Mammary epithelial cell (primary cell): ENCODE measurements at regions of chr19 and their contacts with region 1.

Region 1: GRCh38 chr19:50922317-50922853 is 11.2 kb upstream of the KLK4 start:
- DNase-seq: peak; percentile 77
- H3K4me3 ChIP-seq: no peak overlapping the region
- H3K27ac ChIP-seq: no peak overlapping the region
- H3K4me1 ChIP-seq: peaks cover 22% of the 10 kb centered on the region
- H3K27me3 ChIP-seq: no peaks in the 10 kb centered on the region
- CTCF ChIP-seq: peak; percentile 72 to 94

Region 2: DNA sequence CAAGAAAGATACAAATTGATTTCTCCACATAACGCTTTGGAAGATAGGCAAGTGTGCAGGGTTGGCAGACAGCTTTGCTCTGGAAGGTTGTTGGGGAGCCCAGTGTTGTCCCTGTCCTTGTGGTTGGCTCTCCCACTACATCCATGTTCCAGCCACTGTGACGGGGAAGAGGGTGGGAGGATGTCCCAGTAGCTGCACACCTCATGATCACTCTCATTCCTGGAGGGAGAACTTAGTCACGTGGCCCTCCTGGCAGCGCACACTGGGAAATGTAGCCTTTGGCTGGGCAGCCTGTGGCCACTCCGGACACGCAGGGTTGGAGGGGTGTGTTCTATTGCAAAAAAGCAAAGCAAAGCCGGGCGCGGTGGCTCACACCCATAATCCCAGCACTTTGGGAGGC is 528.4 kb before region 1 on chr19:
- CTCF ChIA-PET with region 1: no interaction called
- dilution Hi-C with region 1: no loop called
- in situ Hi-C with region 1: no loop called
- intact Hi-C with region 1: no loop called
- DNase-seq: no peak
- H3K4me3 ChIP-seq: no peak overlapping the region
- H3K27ac ChIP-seq: no peak overlapping the region
- H3K4me1 ChIP-seq: no peaks in the 10 kb centered on the region
- H3K27me3 ChIP-seq: no peaks in the 10 kb centered on the region
- CTCF ChIP-seq: no peak

Region 3: GRCh38 chr19:50537762-50538230 is 384.6 kb before region 1 on chr19:
- CTCF ChIA-PET with region 1: no interaction called
- dilution Hi-C with region 1: no loop called
- in situ Hi-C with region 1: no loop called
- intact Hi-C with region 1: loop called (anchors 2 kb)
- DNase-seq: peak; percentile 58
- H3K4me3 ChIP-seq: no peak overlapping the region
- H3K27ac ChIP-seq: no peak overlapping the region
- H3K4me1 ChIP-seq: no peaks in the 10 kb centered on the region
- H3K27me3 ChIP-seq: no peaks in the 10 kb centered on the region
- CTCF ChIP-seq: peak; percentile 87

Region 4: GRCh38 chr19:50705422-50706019 is 216.9 kb before region 1 on chr19:
- CTCF ChIA-PET with region 1: no interaction called
- dilution Hi-C with region 1: no loop called
- in situ Hi-C with region 1: no loop called
- intact Hi-C with region 1: loop called (anchors 1 kb)
- DNase-seq: peak; percentile 50
- H3K4me3 ChIP-seq: no peak overlapping the region
- H3K27ac ChIP-seq: no peak overlapping the region
- H3K4me1 ChIP-seq: no peaks in the 10 kb centered on the region
- H3K27me3 ChIP-seq: peaks cover 3% of the 10 kb centered on the region
- CTCF ChIP-seq: peak; percentile 68 to 84

Region 5: GRCh38 chr19:50777754-50778303 is 144.6 kb before region 1 on chr19:
- CTCF ChIA-PET with region 1: no interaction called
- dilution Hi-C with region 1: no loop called
- in situ Hi-C with region 1: no loop called
- intact Hi-C with region 1: loop called (anchors 1 kb)
- DNase-seq: peak; percentile 28
- H3K4me3 ChIP-seq: no peak overlapping the region
- H3K27ac ChIP-seq: no peak overlapping the region
- H3K4me1 ChIP-seq: peaks cover 7% of the 10 kb centered on the region
- H3K27me3 ChIP-seq: peaks cover 16% of the 10 kb centered on the region
- CTCF ChIP-seq: no peak

Region 6: DNA sequence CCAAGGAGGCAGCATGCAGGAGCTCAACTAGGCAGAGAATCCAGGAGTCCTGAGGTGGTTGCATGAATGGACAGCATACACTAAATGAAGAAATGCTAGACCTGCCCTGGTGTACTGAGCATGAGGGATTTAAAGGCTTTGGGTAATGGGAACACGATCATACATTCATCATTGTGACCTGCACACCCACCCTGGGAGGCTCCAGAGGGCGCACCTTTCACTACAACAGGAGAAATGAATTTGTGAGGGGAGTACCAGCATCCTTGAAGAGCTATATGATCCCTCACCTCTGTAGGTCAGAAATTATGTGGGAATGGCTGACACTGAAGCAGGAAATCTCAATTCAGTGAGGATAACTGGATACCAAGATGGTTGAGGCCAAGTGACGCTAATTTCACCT is 40.2 kb before region 1 on chr19:
- CTCF ChIA-PET with region 1: no interaction called
- dilution Hi-C with region 1: no loop called
- in situ Hi-C with region 1: no loop called
- intact Hi-C with region 1: no loop called
- DNase-seq: no peak
- H3K4me3 ChIP-seq: no peak overlapping the region
- H3K27ac ChIP-seq: no peak overlapping the region
- H3K4me1 ChIP-seq: no peaks in the 10 kb centered on the region
- H3K27me3 ChIP-seq: peaks cover 5% of the 10 kb centered on the region
- CTCF ChIP-seq: no peak

Region 7: GRCh38 chr19:50896591-50897190 is 25.7 kb before region 1 on chr19:
- CTCF ChIA-PET with region 1: no interaction called
- dilution Hi-C with region 1: no loop called
- in situ Hi-C with region 1: no loop called
- intact Hi-C with region 1: loop called (anchors 2 kb)
- DNase-seq: peak; percentile 98
- H3K4me3 ChIP-seq: no peak overlapping the region
- H3K27ac ChIP-seq: peak overlapping the region; percentile 55
- H3K4me1 ChIP-seq: peaks cover 18% of the 10 kb centered on the region
- H3K27me3 ChIP-seq: peaks cover 2% of the 10 kb centered on the region
- CTCF ChIP-seq: no peak

Region 8: GRCh38 chr19:51097166-51097738 is 174.9 kb after region 1 on chr19:
- CTCF ChIA-PET with region 1: no interaction called
- dilution Hi-C with region 1: no loop called
- in situ Hi-C with region 1: loop called (anchors 10 kb)
- intact Hi-C with region 1: loop called (anchors 2 kb)
- DNase-seq: peak; percentile 93
- H3K4me3 ChIP-seq: no peak overlapping the region
- H3K27ac ChIP-seq: no peak overlapping the region
- H3K4me1 ChIP-seq: peaks cover 13% of the 10 kb centered on the region
- H3K27me3 ChIP-seq: no peaks in the 10 kb centered on the region
- CTCF ChIP-seq: peak; percentile 67 to 75